ENCODE measurements at regions of chr9 and their contacts with region 1.

Region 1: DNA sequence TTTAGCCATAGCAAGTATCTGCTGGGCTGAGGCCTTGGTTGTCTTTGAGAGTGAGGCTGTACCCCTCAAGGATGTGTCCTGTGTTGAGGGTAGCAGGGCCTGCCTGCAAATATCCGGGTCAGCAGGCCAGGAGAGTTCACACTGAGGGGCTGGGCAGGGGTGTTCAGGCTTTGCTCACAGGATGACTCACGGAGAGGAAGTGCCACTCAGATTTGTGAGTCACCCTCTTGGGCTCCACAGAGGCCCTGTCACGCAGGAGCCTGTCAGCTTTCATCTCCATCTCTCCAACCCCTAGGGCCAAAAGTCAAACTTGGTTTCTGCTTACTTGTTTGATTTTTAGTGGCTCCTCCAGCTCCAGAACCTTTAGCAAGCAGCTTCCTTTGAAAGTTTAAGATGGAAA is 211.5 kb downstream of the SEC61B start:
- DNase-seq: peak; percentile 80
- H3K4me3 ChIP-seq: no peak overlapping the region
- H3K27ac ChIP-seq: peak overlapping the region; percentile 84
- H3K4me1 ChIP-seq: peaks cover 30% of the 10 kb centered on the region
- H3K27me3 ChIP-seq: no peaks in the 10 kb centered on the region
- CTCF ChIP-seq: no peak
- POLR2A ChIP-seq: no peak

Region 2: GRCh38 chr9:99340281-99340680 is 93.3 kb before region 1 on chr9:
- CTCF ChIA-PET with region 1: no interaction called
- POLR2A ChIA-PET with region 1: no interaction called
- dilution Hi-C with region 1: no loop called
- intact Hi-C with region 1: loop called (anchors 2 kb)
- DNase-seq: peak; percentile 83
- H3K4me3 ChIP-seq: no peak overlapping the region
- H3K27ac ChIP-seq: peak overlapping the region; percentile 93
- H3K4me1 ChIP-seq: peaks cover 27% of the 10 kb centered on the region
- H3K27me3 ChIP-seq: no peaks in the 10 kb centered on the region
- CTCF ChIP-seq: no peak
- POLR2A ChIP-seq: peak; percentile 40

Region 3: DNA sequence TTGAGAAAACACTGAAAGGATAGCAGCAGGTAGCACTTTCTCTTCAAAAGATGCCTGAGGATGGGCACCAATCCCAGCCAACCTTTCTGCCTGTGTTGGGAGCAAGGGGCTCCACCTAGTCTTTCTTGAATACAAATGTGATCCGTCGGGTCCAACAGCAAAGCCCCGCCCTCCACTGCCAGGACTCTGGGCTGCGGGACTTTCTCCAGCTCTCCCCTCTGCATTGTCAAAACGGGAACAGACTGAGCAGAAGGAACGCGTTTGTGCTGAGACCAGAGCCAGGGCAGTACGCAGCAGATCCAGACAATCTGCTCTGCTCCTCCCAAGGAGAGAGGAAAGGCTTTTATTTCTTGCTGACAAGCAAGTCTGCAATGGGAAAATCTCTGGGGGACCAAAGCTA is 71.7 kb before region 1 on chr9:
- CTCF ChIA-PET with region 1: no interaction called
- POLR2A ChIA-PET with region 1: no interaction called
- dilution Hi-C with region 1: no loop called
- intact Hi-C with region 1: no loop called
- DNase-seq: no peak
- H3K4me3 ChIP-seq: no peak overlapping the region
- H3K27ac ChIP-seq: no peak overlapping the region
- H3K4me1 ChIP-seq: no peaks in the 10 kb centered on the region
- H3K27me3 ChIP-seq: peaks cover 18 to 34% of the 10 kb centered on the region in 2 experiments
- CTCF ChIP-seq: no peak
- POLR2A ChIP-seq: no peak

Region 4: GRCh38 chr9:99387431-99387830 is 46.1 kb before region 1 on chr9:
- CTCF ChIA-PET with region 1: no interaction called
- POLR2A ChIA-PET with region 1: no interaction called
- dilution Hi-C with region 1: no loop called
- intact Hi-C with region 1: loop called (anchors 1 kb)
- DNase-seq: peak; percentile 9
- H3K4me3 ChIP-seq: no peak overlapping the region
- H3K27ac ChIP-seq: peak overlapping the region; percentile 20
- H3K4me1 ChIP-seq: peaks cover 14% of the 10 kb centered on the region
- H3K27me3 ChIP-seq: no peaks in the 10 kb centered on the region
- CTCF ChIP-seq: no peak
- POLR2A ChIP-seq: no peak

Region 5: DNA sequence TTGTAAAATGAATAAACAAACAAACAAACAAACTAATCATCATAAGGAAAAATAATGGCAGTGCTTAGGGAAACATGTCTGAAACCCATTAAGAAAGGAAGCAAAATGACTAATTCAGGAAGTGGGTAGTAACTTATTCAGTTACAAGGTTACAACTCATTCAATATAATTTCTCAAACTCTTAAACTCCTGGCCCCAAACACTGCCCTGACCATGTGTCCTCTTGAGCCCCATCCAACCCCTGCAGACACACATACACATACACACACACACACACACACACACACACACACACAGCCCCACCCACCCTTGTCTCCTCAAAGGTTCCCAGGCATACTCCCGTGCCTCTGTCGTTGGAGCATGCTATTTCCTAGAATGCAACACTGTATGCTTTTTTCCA is 17.5 kb before region 1 on chr9:
- CTCF ChIA-PET with region 1: no interaction called
- POLR2A ChIA-PET with region 1: no interaction called
- dilution Hi-C with region 1: no loop called
- intact Hi-C with region 1: loop called (anchors 2 kb)
- DNase-seq: no peak
- H3K4me3 ChIP-seq: no peak overlapping the region
- H3K27ac ChIP-seq: no peak overlapping the region
- H3K4me1 ChIP-seq: peaks cover 9% of the 10 kb centered on the region
- H3K27me3 ChIP-seq: no peaks in the 10 kb centered on the region
- CTCF ChIP-seq: no peak
- POLR2A ChIP-seq: no peak

Measured in endothelial cell of umbilical vein (primary cell).